ENCODE measurements at regions of chr2 and their contacts with region 1.

Region 1: DNA sequence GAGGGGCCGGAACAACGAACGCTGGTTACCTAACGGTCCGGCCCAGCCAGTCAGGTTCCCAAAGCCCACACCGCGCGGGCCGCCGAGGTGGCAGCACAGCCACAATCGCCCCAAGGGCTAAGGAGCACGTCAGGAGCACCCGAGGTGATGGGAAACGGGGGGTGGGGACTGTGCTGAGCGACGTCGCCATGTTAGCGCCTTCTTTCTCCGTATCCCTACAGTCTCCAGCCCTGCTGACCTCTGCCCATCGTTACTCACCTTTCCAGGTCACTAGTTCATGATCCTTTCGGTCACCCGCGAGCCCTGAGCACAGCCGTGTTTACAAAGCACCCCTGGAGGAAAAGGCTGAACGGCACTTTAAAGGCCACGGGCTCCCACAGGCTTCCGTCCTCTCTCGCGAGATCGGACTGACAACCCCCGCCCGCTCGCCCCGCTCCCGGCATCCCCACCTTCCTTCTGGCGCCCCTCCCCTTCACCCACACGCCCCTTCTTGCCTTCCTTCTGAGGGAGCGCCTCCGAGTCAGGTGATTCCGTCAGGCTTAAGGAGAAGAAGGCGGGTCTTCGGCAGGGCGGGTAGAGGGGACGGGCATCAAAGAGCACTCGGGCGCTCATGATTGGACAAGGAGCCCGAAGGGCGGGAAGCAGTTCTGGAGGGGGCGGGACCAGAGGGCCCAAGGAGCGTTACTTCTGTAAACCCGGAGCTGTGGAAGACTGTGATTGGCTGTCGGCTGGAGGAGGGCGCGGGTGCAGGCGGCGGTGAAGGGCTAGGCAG is at the start of gene ATF2:
- DNase-seq: peak; percentile 96 to 100 (median 99)
- H3K4me3 ChIP-seq: peak within 1 kb of the TSS; percentile 89 to 98
- H3K4me3 Mint-ChIP-seq: peak within 1 kb of the TSS; percentile 94 to 100 (median 100)
- H3K27ac ChIP-seq: peak within 1 kb of the TSS; percentile 90
- H3K27ac Mint-ChIP-seq: peak within 1 kb of the TSS; percentile 87 to 100 (median 99)
- H3K4me1 ChIP-seq: peaks cover 42% of the 10 kb centered on the region
- H3K4me1 Mint-ChIP-seq: peaks cover 27 to 73% (median 47%) of the 10 kb centered on the region in 4 donors
- H3K27me3 ChIP-seq: no peaks in the 10 kb centered on the region
- H3K27me3 Mint-ChIP-seq: no peaks in the 10 kb centered on the region
- total RNA-seq, gene ATF2: 66.1 to 67.4 TPM

Region 2: GRCh38 chr2:174248187-174248997 is 919.6 kb before region 1 on chr2 and contains the start of gene OLA1:
- CTCF ChIA-PET with region 1: no interaction called
- POLR2A ChIA-PET with region 1: no interaction called
- intact Hi-C with region 1: loop called (anchors 2 kb)
- DNase-seq: peak; percentile 93 to 99 (median 95)
- H3K4me3 ChIP-seq: peak within 1 kb of the TSS; percentile 84 to 87
- H3K4me3 Mint-ChIP-seq: peak within 1 kb of the TSS; percentile 79 to 88 (median 85)
- H3K27ac ChIP-seq: peak within 1 kb of the TSS; percentile 78
- H3K27ac Mint-ChIP-seq: peak within 1 kb of the TSS; percentile 63 to 87 (median 80)
- H3K4me1 ChIP-seq: peaks cover 14% of the 10 kb centered on the region
- H3K4me1 Mint-ChIP-seq: peaks cover 11 to 32% (median 19%) of the 10 kb centered on the region in 4 donors
- H3K27me3 ChIP-seq: no peaks in the 10 kb centered on the region
- H3K27me3 Mint-ChIP-seq: no peaks in the 10 kb centered on the region
- total RNA-seq, gene OLA1: 31.1 to 31.2 TPM

Region 3: DNA sequence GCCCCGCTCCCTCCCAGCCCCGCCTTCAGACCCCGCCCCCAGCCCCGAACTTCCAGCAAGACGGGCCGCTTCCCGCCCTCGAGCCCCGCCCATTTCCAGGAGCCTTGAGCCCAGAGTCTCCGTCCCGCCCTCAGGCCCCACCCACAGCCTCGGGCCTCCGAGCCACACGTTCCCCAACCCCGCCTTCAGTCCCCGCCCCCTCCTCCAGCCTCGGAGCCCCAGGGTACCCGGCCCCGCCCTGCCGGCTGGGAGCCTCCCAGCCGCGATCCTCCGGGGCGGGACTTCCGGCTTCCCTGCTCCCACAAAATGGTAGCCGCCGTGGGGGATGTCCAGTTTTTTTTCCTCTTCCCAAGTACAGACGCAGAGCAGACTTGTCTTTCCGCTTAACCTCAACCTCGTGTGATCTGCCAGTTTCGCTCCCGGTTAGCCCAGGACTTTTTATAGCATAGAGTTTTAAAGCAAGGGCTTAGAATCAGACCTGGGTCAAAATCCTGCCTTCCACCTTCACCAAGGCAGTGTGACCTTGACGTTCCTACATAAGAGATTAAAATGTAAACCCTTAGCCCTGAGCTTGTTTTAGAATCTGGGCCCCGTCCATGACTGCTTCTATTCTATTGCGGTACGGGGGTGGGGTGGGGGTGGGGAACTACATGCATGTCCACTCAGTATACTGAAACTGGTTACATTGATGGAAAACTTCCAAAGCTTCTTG is 680.7 kb before region 1 on chr2:
- CTCF ChIA-PET with region 1: no interaction called
- POLR2A ChIA-PET with region 1: interaction called, 4 read pairs
- intact Hi-C with region 1: loop called (anchors 1 kb)
- DNase-seq: peak; percentile 77 to 94 (median 82)
- H3K4me3 ChIP-seq: peak overlapping the region; percentile 4 to 77
- H3K4me3 Mint-ChIP-seq: peak overlapping the region; percentile 91 to 100 (median 98)
- H3K27ac ChIP-seq: peak overlapping the region; percentile 81
- H3K27ac Mint-ChIP-seq: peak overlapping the region; percentile 91 to 97 (median 94)
- H3K4me1 ChIP-seq: peaks cover 76% of the 10 kb centered on the region
- H3K4me1 Mint-ChIP-seq: peaks cover 48 to 87% (median 64%) of the 10 kb centered on the region in 4 donors
- H3K27me3 ChIP-seq: no peaks in the 10 kb centered on the region
- H3K27me3 Mint-ChIP-seq: no peaks in the 10 kb centered on the region

Region 4: DNA sequence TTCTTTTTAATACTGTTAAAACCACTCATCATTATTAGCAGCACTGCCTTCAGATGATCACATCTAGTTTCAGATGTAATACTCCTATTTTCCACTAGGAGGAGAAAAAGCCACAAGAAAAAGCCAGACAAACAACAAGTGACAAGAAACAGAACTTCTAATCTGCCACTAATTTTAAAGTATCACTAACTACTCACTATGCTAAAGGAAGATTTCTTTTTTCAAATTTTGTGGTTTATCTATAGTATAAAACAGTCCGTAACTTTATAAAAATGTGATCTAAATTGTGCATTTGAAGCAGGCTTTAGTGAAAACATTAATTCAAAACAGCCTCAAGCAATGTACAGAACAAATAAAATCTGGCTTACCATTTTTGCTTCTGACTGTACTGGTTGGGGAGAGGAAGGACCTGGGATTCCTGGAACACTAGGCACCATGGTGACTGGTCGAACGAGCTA is 56.7 kb before region 1 on chr2:
- CTCF ChIA-PET with region 1: interaction called, 3 read pairs
- POLR2A ChIA-PET with region 1: no interaction called
- intact Hi-C with region 1: loop called (anchors 5 kb)
- DNase-seq: peak in 4 of 5 donors; percentile 42 to 54 (median 44)
- H3K4me3 ChIP-seq: no peak overlapping the region
- H3K4me3 Mint-ChIP-seq: no peak overlapping the region
- H3K27ac ChIP-seq: no peak overlapping the region
- H3K27ac Mint-ChIP-seq: peak overlapping the region in 6 of 7 donors; percentile 10 to 72 (median 26)
- H3K4me1 ChIP-seq: no peaks in the 10 kb centered on the region
- H3K4me1 Mint-ChIP-seq: peaks cover 0 to 5% (median 5%) of the 10 kb centered on the region in 4 donors
- H3K27me3 ChIP-seq: no peaks in the 10 kb centered on the region
- H3K27me3 Mint-ChIP-seq: no peaks in the 10 kb centered on the region

Region 5: GRCh38 chr2:175147186-175147585 is 20.8 kb before region 1 on chr2:
- CTCF ChIA-PET with region 1: no interaction called
- POLR2A ChIA-PET with region 1: no interaction called
- intact Hi-C with region 1: no loop called
- DNase-seq: no peak
- H3K4me3 ChIP-seq: no peak overlapping the region
- H3K4me3 Mint-ChIP-seq: no peak overlapping the region
- H3K27ac ChIP-seq: no peak overlapping the region
- H3K27ac Mint-ChIP-seq: no peak overlapping the region
- H3K4me1 ChIP-seq: peaks cover 6% of the 10 kb centered on the region
- H3K4me1 Mint-ChIP-seq: peaks cover 22 to 57% (median 41%) of the 10 kb centered on the region in 4 donors
- H3K27me3 ChIP-seq: no peaks in the 10 kb centered on the region
- H3K27me3 Mint-ChIP-seq: no peaks in the 10 kb centered on the region

Region 6: DNA sequence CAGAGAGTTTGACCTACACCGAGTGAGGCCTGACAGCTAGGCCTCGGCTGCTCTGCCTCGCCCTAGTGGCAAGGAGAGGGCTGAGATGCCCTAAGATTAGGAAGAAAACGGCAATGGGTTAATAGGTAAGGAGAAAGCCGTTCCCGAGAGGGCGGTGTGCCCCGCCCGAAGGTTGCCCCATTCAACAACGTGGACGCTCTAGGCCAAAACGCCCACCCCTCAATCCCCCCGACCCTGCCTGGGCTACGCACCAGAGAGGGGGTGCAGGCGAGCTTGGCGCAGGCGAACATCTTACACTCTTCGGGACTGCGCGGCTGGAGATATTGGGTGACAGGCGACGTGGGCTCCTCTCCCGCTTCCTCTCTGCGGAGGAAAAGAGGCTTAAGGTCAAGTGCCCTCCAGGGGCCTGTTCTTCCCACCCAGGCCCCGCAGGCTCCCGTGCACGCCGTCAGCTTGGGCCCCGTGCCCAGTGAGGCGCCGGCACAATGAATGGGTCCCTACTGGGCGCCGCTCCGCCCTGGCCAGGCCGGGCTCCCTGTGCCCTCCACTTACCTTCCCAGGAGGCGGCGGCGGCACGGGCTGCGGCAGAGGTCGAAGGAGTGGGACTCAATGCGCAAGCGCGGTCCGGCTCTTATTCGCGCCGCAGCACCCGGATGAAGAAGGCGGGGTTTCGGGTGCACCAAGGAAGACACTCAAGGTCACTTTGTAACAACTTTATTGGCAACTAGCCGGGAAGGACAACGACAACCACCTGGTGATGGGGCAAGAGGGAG is 13.3 kb after region 1 on chr2 and contains the start of gene ATP5MC3:
- CTCF ChIA-PET with region 1: interaction called, 11 read pairs
- POLR2A ChIA-PET with region 1: interaction called, 48 read pairs
- intact Hi-C with region 1: loop called (anchors 1 kb)
- DNase-seq: peak; percentile 89 to 91 (median 90)
- H3K4me3 ChIP-seq: peak within 1 kb of the TSS; percentile 59 to 84
- H3K4me3 Mint-ChIP-seq: peak within 1 kb of the TSS; percentile 80 to 95 (median 93)
- H3K27ac ChIP-seq: peak within 1 kb of the TSS; percentile 83
- H3K27ac Mint-ChIP-seq: peak within 1 kb of the TSS; percentile 79 to 98 (median 95)
- H3K4me1 ChIP-seq: peaks cover 25% of the 10 kb centered on the region
- H3K4me1 Mint-ChIP-seq: peaks cover 14 to 22% (median 18%) of the 10 kb centered on the region in 4 donors
- H3K27me3 ChIP-seq: no peaks in the 10 kb centered on the region
- H3K27me3 Mint-ChIP-seq: peaks cover 0 to 2% of the 10 kb centered on the region in 2 donors
- total RNA-seq, gene ATP5MC3: 77.0 to 81.3 TPM

Region 7: GRCh38 chr2:175207741-175208438 is 39.9 kb after region 1 on chr2:
- CTCF ChIA-PET with region 1: no interaction called
- POLR2A ChIA-PET with region 1: no interaction called
- intact Hi-C with region 1: no loop called
- DNase-seq: no peak
- H3K4me3 ChIP-seq: no peak overlapping the region
- H3K4me3 Mint-ChIP-seq: no peak overlapping the region
- H3K27ac ChIP-seq: no peak overlapping the region
- H3K27ac Mint-ChIP-seq: no peak overlapping the region
- H3K4me1 ChIP-seq: no peaks in the 10 kb centered on the region
- H3K4me1 Mint-ChIP-seq: peaks cover 0 to 4% (median 3%) of the 10 kb centered on the region in 4 donors
- H3K27me3 ChIP-seq: no peaks in the 10 kb centered on the region
- H3K27me3 Mint-ChIP-seq: peaks cover 3 to 9% of the 10 kb centered on the region in 2 donors

Measured in CD4-positive, alpha-beta memory T cell (primary cell).